Activated CD8-positive, alpha-beta memory T cell treated with anti-CD3 and anti-CD28 coated beads, Interleukin-2, amount 10 ng/mL, durations not matched to agents 7 days and 5 days (primary cell): ENCODE measurements at regions of chr22 and their contacts with region 1.

Region 1: GRCh38 chr22:41403532-41404318 is 22.0 kb downstream of the TEF start:
- DNase-seq: peak; percentile 92
- ATAC-seq: peak; percentile 100
- H3K4me3 Mint-ChIP-seq: peak overlapping the region; percentile 1
- H3K27ac Mint-ChIP-seq: peak overlapping the region; percentile 58
- H3K4me1 Mint-ChIP-seq: peaks cover 12% of the 10 kb centered on the region
- H3K27me3 Mint-ChIP-seq: no peaks in the 10 kb centered on the region

Region 2: GRCh38 chr22:41458161-41458728 is 54.5 kb after region 1 on chr22:
- CTCF ChIA-PET with region 1: interaction called, 13 read pairs
- DNase-seq: no peak
- ATAC-seq: no peak
- H3K4me3 Mint-ChIP-seq: no peak overlapping the region
- H3K27ac Mint-ChIP-seq: peak overlapping the region; percentile 80
- H3K4me1 Mint-ChIP-seq: peaks cover 10% of the 10 kb centered on the region
- H3K27me3 Mint-ChIP-seq: no peaks in the 10 kb centered on the region

Region 3: GRCh38 chr22:41491374-41492100 is 87.8 kb after region 1 on chr22:
- CTCF ChIA-PET with region 1: interaction called, 10 read pairs
- DNase-seq: no peak
- ATAC-seq: no peak
- H3K4me3 Mint-ChIP-seq: no peak overlapping the region
- H3K27ac Mint-ChIP-seq: no peak overlapping the region
- H3K4me1 Mint-ChIP-seq: peaks cover 2% of the 10 kb centered on the region
- H3K27me3 Mint-ChIP-seq: no peaks in the 10 kb centered on the region

Region 4: GRCh38 chr22:41517172-41518047 is 113.7 kb after region 1 on chr22:
- CTCF ChIA-PET with region 1: interaction called, 81 read pairs
- DNase-seq: no peak
- ATAC-seq: no peak
- H3K4me3 Mint-ChIP-seq: no peak overlapping the region
- H3K27ac Mint-ChIP-seq: no peak overlapping the region
- H3K4me1 Mint-ChIP-seq: no peaks in the 10 kb centered on the region
- H3K27me3 Mint-ChIP-seq: no peaks in the 10 kb centered on the region